H1 (cell line): ENCODE measurements at regions of chr9 and their contacts with region 1.

Region 1: DNA sequence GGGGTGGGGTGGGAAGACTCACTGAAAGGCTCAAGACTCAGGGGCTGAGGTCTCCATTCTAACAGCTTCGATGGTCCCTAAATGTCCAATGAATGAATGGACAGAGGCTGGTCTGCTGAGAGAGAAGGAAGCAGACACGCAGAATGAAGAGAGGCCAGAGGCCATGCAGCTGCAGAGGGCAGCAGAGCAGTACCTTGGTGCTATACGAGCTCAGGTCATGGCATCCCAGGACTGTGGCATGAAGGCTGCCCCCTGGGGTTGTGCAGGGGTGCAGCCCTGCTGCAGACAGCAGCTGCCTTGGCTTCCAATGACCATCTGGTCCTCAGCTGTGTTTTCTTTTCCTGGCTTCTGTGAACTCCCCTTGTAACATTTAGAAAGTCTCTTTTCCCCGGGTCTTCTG is 15.2 kb upstream of the CORO2A start:
- DNase-seq: no peak
- H3K4me3 ChIP-seq: no peak overlapping the region
- H3K27ac ChIP-seq: no peak overlapping the region
- H3K4me1 ChIP-seq: no peaks in the 10 kb centered on the region
- H3K27me3 ChIP-seq: no peaks in the 10 kb centered on the region
- CTCF ChIP-seq: peak in 2 of 3 experiments; percentile 8 to 10; a peak in 3 of 4 replicates
- EP300 ChIP-seq: no peak
- POLR2A ChIP-seq: no peak
- RAD21 ChIP-seq: no peak

Region 2: GRCh38 chr9:98192503-98193335 is 14.9 kb before region 1 on chr9 and contains the start of gene CORO2A:
- CTCF ChIA-PET with region 1: interaction called, 23 read pairs
- POLR2A ChIA-PET with region 1: interaction called, 6 read pairs
- DNase-seq: peak; percentile 57 to 88
- H3K4me3 ChIP-seq: peak within 1 kb of the TSS; percentile 63 to 76 (median 74)
- H3K27ac ChIP-seq: no peak within 1 kb of the TSS
- H3K4me1 ChIP-seq: peaks cover 0 to 16% (median 8%) of the 10 kb centered on the region in 4 experiments; a peak in 6 of 7 replicates
- H3K27me3 ChIP-seq: peaks cover 0 to 7% (median 3%) of the 10 kb centered on the region in 4 experiments; a peak in 2 of 7 replicates
- CTCF ChIP-seq: peak; percentile 64 to 76 (median 68)
- EP300 ChIP-seq: no peak
- POLR2A ChIP-seq: no peak
- RAD21 ChIP-seq: peak; percentile 57 to 69
- total RNA-seq, gene CORO2A: 26.2 and 27.9 TPM in 2 replicates

Region 3: GRCh38 chr9:98222885-98223640 is 15.5 kb after region 1 on chr9:
- CTCF ChIA-PET with region 1: interaction called, 62 read pairs
- POLR2A ChIA-PET with region 1: interaction called, 8 read pairs
- DNase-seq: no peak
- H3K4me3 ChIP-seq: no peak overlapping the region
- H3K27ac ChIP-seq: no peak overlapping the region
- H3K4me1 ChIP-seq: peaks cover 8 to 21% (median 13%) of the 10 kb centered on the region in 4 experiments
- H3K27me3 ChIP-seq: no peaks in the 10 kb centered on the region
- CTCF ChIP-seq: no peak
- EP300 ChIP-seq: no peak
- POLR2A ChIP-seq: no peak
- RAD21 ChIP-seq: no peak

Region 4: DNA sequence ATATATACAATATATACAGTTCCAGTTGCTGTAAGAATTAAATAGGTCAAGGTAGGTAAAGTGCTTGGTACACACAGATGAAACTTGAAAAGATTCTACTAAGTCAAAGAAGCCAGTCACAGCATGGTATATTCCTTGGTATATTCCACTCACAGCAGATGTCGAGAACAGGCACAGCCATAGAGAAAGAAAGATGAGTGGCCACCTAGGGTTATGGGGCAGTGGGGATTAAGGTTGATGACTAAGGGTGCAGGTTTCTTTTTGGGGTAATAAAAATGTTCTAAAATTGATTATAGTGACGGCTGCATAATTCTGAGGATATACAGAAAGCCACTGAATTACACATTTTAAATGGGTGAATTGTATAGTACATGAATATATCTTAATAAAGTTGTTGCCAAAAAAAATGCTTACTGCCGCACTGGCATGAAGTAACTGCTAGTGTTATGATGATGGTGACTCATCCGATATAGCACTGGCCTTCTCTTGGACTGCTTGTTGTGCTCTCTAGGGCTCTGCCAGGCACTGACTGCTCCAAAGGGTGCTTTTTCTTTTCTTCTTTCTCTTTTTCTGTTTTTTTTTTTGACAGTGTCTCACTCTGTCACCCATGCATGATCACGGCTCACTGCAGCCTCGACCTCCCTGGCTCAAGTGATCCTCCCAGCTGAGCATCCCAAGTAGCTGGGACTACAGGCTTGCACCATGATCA is 24.3 kb after region 1 on chr9:
- CTCF ChIA-PET with region 1: interaction called, 45 read pairs
- POLR2A ChIA-PET with region 1: interaction called, 5 read pairs
- DNase-seq: no peak
- H3K4me3 ChIP-seq: no peak overlapping the region
- H3K27ac ChIP-seq: no peak overlapping the region
- H3K4me1 ChIP-seq: no peaks in the 10 kb centered on the region
- H3K27me3 ChIP-seq: no peaks in the 10 kb centered on the region
- CTCF ChIP-seq: no peak
- EP300 ChIP-seq: no peak
- POLR2A ChIP-seq: no peak
- RAD21 ChIP-seq: no peak

Region 5: DNA sequence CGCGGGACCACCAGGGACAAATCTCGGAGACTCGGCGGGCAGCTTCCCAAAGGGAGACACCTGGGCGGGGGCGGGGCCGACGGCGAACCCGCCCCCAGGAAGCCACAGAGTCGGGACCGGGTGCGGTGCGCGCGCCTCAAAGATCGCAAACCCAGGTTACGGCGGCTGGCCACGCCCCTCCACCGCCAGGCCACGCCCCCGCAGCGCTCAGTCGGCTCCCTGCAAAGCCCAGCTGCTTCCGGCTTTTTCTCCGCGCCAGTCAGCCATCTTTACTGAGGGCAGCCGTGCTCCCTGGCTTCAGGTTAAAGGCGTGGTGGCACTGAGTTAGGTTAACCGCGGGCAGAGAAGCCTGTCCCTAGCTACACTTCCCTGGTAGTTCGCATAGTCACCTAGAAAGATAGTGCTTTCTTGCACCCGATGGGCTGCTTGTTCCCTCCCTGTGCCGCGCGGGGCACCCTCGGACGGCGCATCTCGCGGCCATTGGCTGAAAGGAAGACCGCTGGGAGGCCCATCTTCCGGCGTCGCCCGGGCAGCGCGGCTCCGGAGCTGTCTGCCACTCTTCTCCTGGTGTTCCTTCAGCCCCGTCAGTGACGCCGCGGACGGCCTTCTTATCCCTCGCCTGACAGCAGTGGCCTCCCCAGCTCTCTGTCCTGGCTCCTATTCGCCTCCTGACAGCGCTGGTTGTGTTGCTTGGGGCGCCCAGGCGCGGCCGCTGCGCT is 48.1 kb after region 1 on chr9 and contains the start of gene TBC1D2:
- CTCF ChIA-PET with region 1: interaction called, 22 read pairs
- POLR2A ChIA-PET with region 1: no interaction called
- DNase-seq: peak; percentile 82 to 99
- H3K4me3 ChIP-seq: peak within 1 kb of the TSS; percentile 80 to 93 (median 88)
- H3K27ac ChIP-seq: peak within 1 kb of the TSS; percentile 94
- H3K4me1 ChIP-seq: peaks cover 0 to 4% (median 1%) of the 10 kb centered on the region in 4 experiments; a peak in 5 of 7 replicates
- H3K27me3 ChIP-seq: no peaks in the 10 kb centered on the region
- CTCF ChIP-seq: no peak
- EP300 ChIP-seq: no peak
- POLR2A ChIP-seq: no peak; a peak in 1 of 3 replicates
- RAD21 ChIP-seq: no peak
- total RNA-seq, gene TBC1D2: 7.4 and 8.0 TPM in 2 replicates

Region 6: DNA sequence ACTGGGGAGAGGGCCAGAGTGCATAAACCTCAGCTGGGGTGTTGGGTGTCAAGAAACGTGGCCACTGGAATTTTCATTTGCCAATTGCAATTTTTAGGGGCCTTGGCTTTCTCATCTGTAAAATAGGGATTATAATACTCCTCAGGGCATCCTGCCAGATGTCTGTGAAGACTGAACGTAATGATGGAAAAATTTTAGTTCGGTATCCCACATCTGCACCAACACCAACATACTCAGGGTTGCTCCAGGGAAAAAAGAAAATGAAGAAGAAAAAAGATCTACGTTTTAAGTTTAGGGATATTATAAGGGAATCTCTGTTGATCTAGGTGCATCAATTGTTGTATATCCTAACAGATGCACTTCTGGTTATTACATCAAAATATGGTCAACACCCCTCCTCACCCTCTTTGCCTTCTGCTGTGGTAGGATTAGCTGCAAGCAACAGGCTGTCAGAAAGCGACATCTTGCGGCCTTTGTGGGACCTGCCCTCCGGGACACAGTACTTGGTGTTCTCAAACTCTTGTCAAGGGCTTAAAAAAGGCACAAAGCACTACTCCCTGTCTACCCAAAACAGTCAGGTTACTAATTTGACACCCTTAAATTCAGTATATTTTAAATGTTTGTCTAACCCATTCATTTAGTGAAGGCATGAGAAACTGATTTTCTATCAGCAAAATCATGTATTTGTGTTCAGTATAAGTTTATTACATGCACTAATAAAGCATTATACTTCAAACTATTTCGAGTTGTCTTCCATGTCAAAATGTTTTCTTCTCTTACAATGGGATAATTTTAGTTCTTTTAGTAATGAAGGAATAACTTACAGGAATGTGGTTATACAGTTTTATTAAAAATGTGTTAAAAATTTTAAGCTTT is 56.1 kb after region 1 on chr9:
- CTCF ChIA-PET with region 1: interaction called, 18 read pairs
- POLR2A ChIA-PET with region 1: interaction called, 3 read pairs
- DNase-seq: peak in 1 of 2 experiments; percentile 75
- H3K4me3 ChIP-seq: no peak overlapping the region
- H3K27ac ChIP-seq: no peak overlapping the region
- H3K4me1 ChIP-seq: peaks cover 0 to 3% (median 0%) of the 10 kb centered on the region in 4 experiments; a peak in 1 of 7 replicates
- H3K27me3 ChIP-seq: no peaks in the 10 kb centered on the region
- CTCF ChIP-seq: peak; percentile 88 to 98 (median 93)
- EP300 ChIP-seq: no peak
- POLR2A ChIP-seq: no peak
- RAD21 ChIP-seq: peak; percentile 98 to 99